HAP-1 (cell line): ENCODE measurements at regions of chrX and their contacts with region 1.

Region 1: GRCh38 chrX:13747836-13748235 is 13.3 kb downstream of the OFD1 start:
- DNase-seq: peak; percentile 29 to 55
- H3K4me3 ChIP-seq: no peak overlapping the region
- H3K4me1 ChIP-seq: peaks cover 2% of the 10 kb centered on the region; the same call in 1 of the 2 replicates
- H3K27me3 ChIP-seq: no peaks in the 10 kb centered on the region

Region 2: GRCh38 chrX:13515211-13515930 is 232.5 kb before region 1 on chrX:
- in situ Hi-C with region 1: loop called (anchors 10 kb)
- DNase-seq: no peak
- H3K4me3 ChIP-seq: no peak overlapping the region
- H3K4me1 ChIP-seq: no peaks in the 10 kb centered on the region
- H3K27me3 ChIP-seq: no peaks in the 10 kb centered on the region

Region 3: GRCh38 chrX:13653022-13653693 is 94.7 kb before region 1 on chrX and contains the start of gene TCEANC:
- in situ Hi-C with region 1: loop called (anchors 10 kb)
- DNase-seq: peak; percentile 95 to 98
- H3K4me3 ChIP-seq: peak within 1 kb of the TSS; percentile 49
- H3K4me1 ChIP-seq: peaks cover 2% of the 10 kb centered on the region
- H3K27me3 ChIP-seq: no peaks in the 10 kb centered on the region

Region 4: DNA sequence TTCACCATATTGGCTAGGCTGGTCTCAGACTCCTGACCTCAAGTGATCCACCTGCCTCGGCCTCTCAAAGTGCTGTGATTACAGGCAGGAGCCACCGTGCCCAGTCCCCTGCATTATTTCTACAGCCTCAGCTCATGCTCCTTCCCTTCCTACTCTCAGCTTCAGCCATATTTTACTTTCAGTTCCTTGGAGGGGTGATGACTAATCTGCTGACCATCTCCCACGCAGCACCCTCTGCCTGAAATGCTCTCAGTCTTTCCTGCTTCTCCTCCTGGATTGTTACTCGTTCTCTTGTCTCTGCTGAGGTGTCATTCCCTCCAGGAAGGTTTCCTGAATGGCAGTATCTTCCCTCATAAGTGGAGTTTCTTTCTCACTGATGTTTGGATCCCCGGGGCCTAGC is 1188.7 kb after region 1 on chrX:
- in situ Hi-C with region 1: no loop called
- DNase-seq: no peak
- H3K4me3 ChIP-seq: no peak overlapping the region
- H3K4me1 ChIP-seq: no peaks in the 10 kb centered on the region
- H3K27me3 ChIP-seq: no peaks in the 10 kb centered on the region